Activated B cell treated with CpG ODN at 0.5 μM for 24 hours (primary cell): ENCODE measurements at regions of chr17 and their contacts with region 1.

Region 1: DNA sequence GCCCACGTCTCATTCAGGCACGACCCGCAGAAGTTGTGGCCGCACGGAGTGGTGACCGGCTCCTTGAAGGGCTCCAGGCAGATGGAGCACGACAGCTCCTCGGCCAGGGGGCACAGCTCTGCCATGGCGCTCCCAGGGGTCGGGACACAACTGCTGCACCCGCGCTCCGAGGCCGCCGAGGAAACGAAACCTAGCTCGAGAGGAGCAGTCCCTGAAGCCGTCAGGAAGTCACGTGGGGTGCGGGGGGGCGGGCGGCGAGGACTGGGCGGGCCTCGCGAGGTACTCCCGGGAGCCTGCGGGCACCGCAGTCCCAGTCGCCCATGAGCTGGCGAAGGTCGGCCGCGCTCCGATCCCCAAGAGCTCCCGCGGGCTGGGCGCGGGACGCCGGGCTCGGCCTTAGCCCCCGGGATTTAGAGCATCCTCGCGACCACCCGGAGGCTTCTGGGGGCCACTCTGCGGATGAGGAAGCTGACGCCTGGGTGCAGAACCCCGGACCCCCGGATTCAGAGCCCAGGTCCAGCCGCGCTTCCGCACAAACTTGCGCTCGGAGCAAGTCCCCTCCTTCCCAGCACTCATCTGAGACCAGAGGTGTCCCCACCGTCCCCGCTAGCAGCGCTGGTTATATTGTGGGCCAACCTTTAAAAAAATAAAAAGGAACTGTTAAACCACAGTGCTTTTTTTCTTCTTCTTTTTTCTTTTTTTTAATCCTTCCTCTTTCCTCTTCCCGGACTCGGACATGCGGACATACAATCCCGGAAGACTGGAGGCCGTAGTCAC is at the start of gene TRIM25:
- DNase-seq: peak; percentile 71
- ATAC-seq: peak; percentile 87
- H3K4me3 Mint-ChIP-seq: peak within 1 kb of the TSS; percentile 94
- H3K27ac Mint-ChIP-seq: peak within 1 kb of the TSS; percentile 90
- H3K4me1 Mint-ChIP-seq: peaks cover 54% of the 10 kb centered on the region
- H3K27me3 Mint-ChIP-seq: no peaks in the 10 kb centered on the region
- CTCF ChIP-seq: no peak
- total RNA-seq, gene TRIM25: 63.5 and 71.4 TPM in 2 replicates

Region 2: GRCh38 chr17:56798908-56799307 is 115.1 kb before region 1 on chr17:
- CTCF ChIA-PET with region 1: no interaction called
- POLR2A ChIA-PET with region 1: no interaction called
- intact Hi-C with region 1: no loop called
- DNase-seq: no peak
- ATAC-seq: no peak
- H3K4me3 Mint-ChIP-seq: no peak overlapping the region
- H3K27ac Mint-ChIP-seq: no peak overlapping the region
- H3K4me1 Mint-ChIP-seq: no peaks in the 10 kb centered on the region
- H3K27me3 Mint-ChIP-seq: no peaks in the 10 kb centered on the region
- CTCF ChIP-seq: no peak

Region 3: DNA sequence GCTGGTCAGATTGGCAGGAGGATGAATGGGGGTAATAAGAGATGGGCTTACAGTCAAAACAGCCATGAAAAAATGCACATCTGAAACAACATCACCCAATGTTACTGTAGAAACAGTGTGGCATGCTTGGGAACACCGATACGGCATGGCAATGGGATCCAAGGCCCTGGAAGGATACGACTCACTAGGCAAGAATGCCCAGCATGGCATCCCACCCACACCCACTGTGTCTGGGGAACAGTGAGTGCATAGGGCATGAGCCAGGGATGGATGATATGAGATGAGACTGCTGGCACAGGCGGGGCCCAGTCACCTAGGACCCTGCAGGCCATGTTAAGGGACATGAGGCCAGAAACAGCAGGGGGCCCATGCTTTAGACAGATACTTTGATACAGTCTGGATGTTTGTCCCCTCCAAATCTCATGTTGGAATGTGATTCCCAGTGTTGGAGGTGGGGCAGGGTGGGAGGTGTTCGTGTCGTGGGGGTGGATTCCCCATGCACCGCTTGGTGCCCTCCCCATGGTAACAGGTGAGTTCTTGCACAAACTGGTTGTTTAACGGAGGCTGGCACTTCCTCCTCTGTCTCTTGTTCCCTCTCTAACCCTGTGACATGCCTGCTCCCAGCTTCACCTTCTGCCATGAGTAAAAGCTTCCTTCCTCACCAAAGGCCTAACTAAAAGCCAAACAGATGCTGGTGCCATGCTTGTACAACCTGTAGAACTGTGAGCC is 11.5 kb before region 1 on chr17:
- CTCF ChIA-PET with region 1: no interaction called
- POLR2A ChIA-PET with region 1: interaction called, 11 read pairs
- intact Hi-C with region 1: loop called (anchors 2 kb)
- DNase-seq: no peak
- ATAC-seq: no peak
- H3K4me3 Mint-ChIP-seq: no peak overlapping the region
- H3K27ac Mint-ChIP-seq: no peak overlapping the region
- H3K4me1 Mint-ChIP-seq: peaks cover 24% of the 10 kb centered on the region
- H3K27me3 Mint-ChIP-seq: no peaks in the 10 kb centered on the region
- CTCF ChIP-seq: no peak

Region 4: DNA sequence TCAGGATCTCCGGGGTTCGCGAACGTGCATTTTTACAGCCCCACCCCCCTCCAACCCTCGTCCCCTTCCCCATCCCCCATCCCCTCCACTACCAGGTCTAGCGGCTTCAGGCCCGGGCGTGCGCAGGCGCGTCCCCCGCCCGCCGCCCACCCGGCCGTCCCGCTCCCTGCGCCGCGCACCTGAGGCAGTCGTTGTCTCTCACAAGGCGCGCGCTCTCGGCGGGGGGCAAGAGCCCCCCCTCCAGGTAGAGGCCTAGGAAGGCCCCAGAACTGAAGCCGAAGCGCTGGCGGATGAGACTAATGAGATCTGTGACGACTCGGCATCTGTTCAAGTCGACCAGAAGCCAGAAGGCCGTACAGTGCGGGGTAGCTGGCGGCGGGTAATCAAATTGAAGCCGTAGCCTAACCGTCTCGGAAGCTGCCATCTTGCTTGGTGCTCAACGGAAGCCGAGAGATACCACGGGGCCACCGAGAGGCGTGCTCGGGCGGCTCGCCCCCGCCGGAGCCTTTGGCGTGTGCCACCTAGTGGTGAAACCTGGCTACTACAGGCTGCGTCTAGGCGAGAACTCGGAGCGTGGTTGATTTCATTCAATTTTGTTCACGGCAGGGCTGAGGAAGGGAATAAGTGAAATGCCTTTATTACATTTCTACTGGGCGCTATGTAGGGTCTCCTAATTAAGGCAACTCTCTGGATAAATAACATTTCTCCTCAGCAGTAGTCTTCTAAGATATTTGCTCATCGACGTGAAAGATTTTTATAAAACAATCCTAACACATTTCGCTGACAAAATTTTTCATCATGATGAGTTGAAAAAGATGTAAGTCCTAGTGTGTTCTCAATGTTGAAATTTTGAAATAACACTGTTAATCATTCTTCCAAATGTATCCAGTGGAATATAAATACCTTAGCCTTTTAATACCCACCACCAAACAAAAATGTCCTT is 46.8 kb after region 1 on chr17 and contains the start of gene COIL:
- CTCF ChIA-PET with region 1: no interaction called
- POLR2A ChIA-PET with region 1: interaction called, 7 read pairs
- intact Hi-C with region 1: loop called (anchors 1 kb)
- DNase-seq: peak; percentile 90
- ATAC-seq: peak; percentile 98
- H3K4me3 Mint-ChIP-seq: peak within 1 kb of the TSS; percentile 86
- H3K27ac Mint-ChIP-seq: peak within 1 kb of the TSS; percentile 84
- H3K4me1 Mint-ChIP-seq: peaks cover 23% of the 10 kb centered on the region
- H3K27me3 Mint-ChIP-seq: no peaks in the 10 kb centered on the region
- CTCF ChIP-seq: peak; percentile 95
- total RNA-seq, gene COIL: 21.6 and 21.9 TPM in 2 replicates